ENCODE measurements at regions of chr15 and their contacts with region 1.

Region 1: GRCh38 chr15:45587095-45587860 is at the start of gene BLOC1S6:
- DNase-seq: peak; percentile 52
- H3K4me3 ChIP-seq: peak within 1 kb of the TSS; percentile 91
- CTCF ChIP-seq: no peak

Region 2: GRCh38 chr15:45448066-45448510 is 139.2 kb before region 1 on chr15:
- CTCF ChIA-PET with region 1: no interaction called
- POLR2A ChIA-PET with region 1: no interaction called
- DNase-seq: no peak
- H3K4me3 ChIP-seq: no peak overlapping the region
- CTCF ChIP-seq: no peak

Region 3: GRCh38 chr15:45549541-45550220 is 37.6 kb before region 1 on chr15:
- CTCF ChIA-PET with region 1: no interaction called
- POLR2A ChIA-PET with region 1: interaction called, 13 read pairs
- DNase-seq: no peak
- H3K4me3 ChIP-seq: no peak overlapping the region
- CTCF ChIP-seq: no peak